ENCODE measurements at regions of chr21 and their contacts with region 1.

Region 1: GRCh38 chr21:33025489-33026442 is at the start of gene OLIG2:
- DNase-seq: no peak
- ATAC-seq: no peak
- H3K4me3 ChIP-seq: peak within 1 kb of the TSS in 3 of 12 donors; percentile 16 to 21 (median 20)
- H3K27ac ChIP-seq: no peak within 1 kb of the TSS
- H3K4me1 ChIP-seq: peaks cover 0 to 72% (median 33%) of the 10 kb centered on the region in 12 donors
- H3K27me3 ChIP-seq: peaks cover 81 to 100% (median 99%) of the 10 kb centered on the region in 9 donors
- CTCF ChIP-seq: no peak
- POLR2A ChIP-seq: no peak
- total RNA-seq, gene OLIG2: not detected

Region 2: GRCh38 chr21:32958288-32959002 is 67.3 kb before region 1 on chr21:
- intact Hi-C with region 1: no loop called
- DNase-seq: no peak
- ATAC-seq: no peak
- H3K4me3 ChIP-seq: no peak overlapping the region
- H3K27ac ChIP-seq: no peak overlapping the region
- H3K4me1 ChIP-seq: no peaks in the 10 kb centered on the region
- H3K27me3 ChIP-seq: peaks cover 0 to 79% (median 15%) of the 10 kb centered on the region in 9 donors
- CTCF ChIP-seq: no peak
- POLR2A ChIP-seq: no peak

Region 3: GRCh38 chr21:33069976-33070811 is 44.4 kb after region 1 on chr21 and contains the start of gene OLIG1:
- intact Hi-C with region 1: loop called in 1 of 10 experiments (anchors 5 kb)
- DNase-seq: peak in 4 of 5 donors; percentile 42 to 84 (median 58)
- ATAC-seq: peak in 3 of 4 donors; percentile 80 to 94 (median 88)
- H3K4me3 ChIP-seq: peak within 1 kb of the TSS; percentile 16 to 57 (median 42)
- H3K27ac ChIP-seq: no peak within 1 kb of the TSS
- H3K4me1 ChIP-seq: peaks cover 0 to 36% (median 13%) of the 10 kb centered on the region in 12 donors
- H3K27me3 ChIP-seq: peaks cover 33 to 100% (median 87%) of the 10 kb centered on the region in 9 donors
- CTCF ChIP-seq: no peak
- POLR2A ChIP-seq: no peak
- total RNA-seq, gene OLIG1: 0.67 TPM in 1 of 9 donors, not detected in the others